Activated CD4-positive, alpha-beta memory T cell treated with anti-CD3 and anti-CD28 coated beads, Interleukin-2, amount 10 ng/mL, durations not matched to agents 7 days and 5 days (primary cell): ENCODE measurements at regions of chr5 and their contacts with region 1.

Region 1: GRCh38 chr5:132426525-132427138 is 57.1 kb downstream of the SLC22A5 start:
- DNase-seq: peak; percentile 90
- H3K4me3 Mint-ChIP-seq: peak overlapping the region; percentile 77
- H3K27ac Mint-ChIP-seq: peak overlapping the region; percentile 99
- H3K4me1 Mint-ChIP-seq: peaks cover 98% of the 10 kb centered on the region
- H3K27me3 Mint-ChIP-seq: no peaks in the 10 kb centered on the region

Region 2: DNA sequence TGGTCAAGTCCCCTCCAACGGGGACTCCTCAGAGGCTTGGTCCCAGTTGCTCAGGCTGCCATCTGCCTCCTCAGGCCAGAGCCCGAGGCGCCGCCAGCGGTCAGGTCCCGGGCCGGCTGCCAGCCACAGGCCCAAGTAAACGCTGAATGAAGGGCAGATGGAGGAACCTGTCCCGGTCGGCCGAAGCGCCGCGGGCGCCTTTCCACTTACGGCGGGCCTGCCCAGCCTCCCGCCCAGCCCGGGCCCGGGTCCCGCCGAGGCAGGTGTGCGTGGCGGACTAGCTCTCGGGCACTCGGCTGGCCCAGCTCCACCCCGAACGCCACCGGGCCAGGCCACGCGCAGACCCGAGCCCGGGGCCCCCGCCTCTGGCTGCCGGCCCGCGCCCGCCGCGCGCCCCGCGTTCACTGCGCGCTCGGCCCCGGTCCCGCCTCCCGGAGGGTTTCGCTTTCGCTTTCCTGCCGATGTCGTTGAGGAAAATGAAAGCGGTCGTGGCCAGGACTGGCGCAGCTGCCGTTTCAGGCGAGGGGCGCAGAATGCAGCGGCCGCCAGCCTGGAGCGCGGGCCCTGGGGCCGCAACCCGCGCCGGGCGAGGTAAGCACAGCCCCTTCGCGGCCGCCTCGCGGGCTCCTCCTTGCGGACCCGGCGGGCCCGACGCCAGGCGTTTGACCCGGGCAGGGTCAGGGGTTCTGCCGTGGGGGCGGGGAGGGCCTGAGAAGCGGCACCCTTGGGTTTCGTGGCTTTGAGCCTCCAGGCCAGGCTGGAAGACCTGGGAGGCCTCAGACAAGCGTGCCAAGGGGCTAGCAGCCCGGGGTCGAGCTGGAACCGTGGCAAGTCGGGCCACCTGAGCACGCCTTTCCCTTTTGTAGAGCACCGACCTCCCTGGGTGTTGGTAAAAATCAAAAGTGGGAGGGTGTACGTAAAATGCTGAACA is 15.9 kb before region 1 on chr5:
- CTCF ChIA-PET with region 1: interaction called, 38 read pairs
- POLR2A ChIA-PET with region 1: interaction called, 147 read pairs
- DNase-seq: peak; percentile 89
- H3K4me3 Mint-ChIP-seq: peak overlapping the region; percentile 95
- H3K27ac Mint-ChIP-seq: peak overlapping the region; percentile 99
- H3K4me1 Mint-ChIP-seq: peaks cover 59% of the 10 kb centered on the region
- H3K27me3 Mint-ChIP-seq: no peaks in the 10 kb centered on the region

Region 3: GRCh38 chr5:132446669-132447068 is 20.0 kb after region 1 on chr5:
- CTCF ChIA-PET with region 1: interaction called, 6 read pairs
- POLR2A ChIA-PET with region 1: interaction called, 15 read pairs
- DNase-seq: no peak
- H3K4me3 Mint-ChIP-seq: no peak overlapping the region
- H3K27ac Mint-ChIP-seq: no peak overlapping the region
- H3K4me1 Mint-ChIP-seq: peaks cover 60% of the 10 kb centered on the region
- H3K27me3 Mint-ChIP-seq: no peaks in the 10 kb centered on the region

Region 4: GRCh38 chr5:132473019-132473531 is 46.4 kb after region 1 on chr5:
- CTCF ChIA-PET with region 1: interaction called, 111 read pairs
- POLR2A ChIA-PET with region 1: interaction called, 1,155 read pairs
- DNase-seq: peak; percentile 94
- H3K4me3 Mint-ChIP-seq: peak overlapping the region; percentile 28
- H3K27ac Mint-ChIP-seq: peak overlapping the region; percentile 94
- H3K4me1 Mint-ChIP-seq: peaks cover 90% of the 10 kb centered on the region
- H3K27me3 Mint-ChIP-seq: no peaks in the 10 kb centered on the region

Region 5: GRCh38 chr5:132500931-132501630 is 74.4 kb after region 1 on chr5:
- CTCF ChIA-PET with region 1: interaction called, 26 read pairs
- POLR2A ChIA-PET with region 1: interaction called, 1,155 read pairs
- DNase-seq: peak; percentile 78
- H3K4me3 Mint-ChIP-seq: no peak overlapping the region
- H3K27ac Mint-ChIP-seq: no peak overlapping the region
- H3K4me1 Mint-ChIP-seq: peaks cover 39% of the 10 kb centered on the region
- H3K27me3 Mint-ChIP-seq: peaks cover 3% of the 10 kb centered on the region

Region 6: GRCh38 chr5:132546108-132546507 is 119.5 kb after region 1 on chr5:
- CTCF ChIA-PET with region 1: no interaction called
- POLR2A ChIA-PET with region 1: no interaction called
- DNase-seq: peak; percentile 27
- H3K4me3 Mint-ChIP-seq: no peak overlapping the region
- H3K27ac Mint-ChIP-seq: no peak overlapping the region
- H3K4me1 Mint-ChIP-seq: peaks cover 43% of the 10 kb centered on the region
- H3K27me3 Mint-ChIP-seq: peaks cover 4% of the 10 kb centered on the region